ENCODE measurements at regions of chr7 and their contacts with region 1.

Region 1: GRCh38 chr7:73509463-73509862 is 12.6 kb downstream of the BAZ1B start:
- DNase-seq: no peak
- H3K4me3 ChIP-seq: no peak overlapping the region
- H3K27ac ChIP-seq: no peak overlapping the region
- H3K4me1 ChIP-seq: no peaks in the 10 kb centered on the region
- H3K27me3 ChIP-seq: no peaks in the 10 kb centered on the region
- CTCF ChIP-seq: no peak

Region 2: DNA sequence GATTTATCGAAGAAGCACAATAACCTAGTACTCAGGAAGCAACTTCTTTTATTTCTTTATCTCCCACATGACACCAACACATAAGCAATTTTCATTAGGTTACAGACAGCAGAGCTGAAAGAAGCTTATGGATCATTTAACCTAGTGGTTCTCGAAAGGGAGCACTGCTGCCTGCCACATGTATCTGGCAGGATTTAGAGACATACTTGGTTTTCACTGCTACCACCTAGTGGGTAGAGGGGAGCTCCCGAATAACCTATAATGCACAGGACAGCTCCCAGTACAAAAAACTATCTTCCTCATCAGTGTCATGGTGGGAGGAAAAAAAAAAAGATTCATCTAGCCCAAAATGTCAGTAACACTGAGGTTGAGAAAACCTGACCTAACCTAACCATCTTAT is 41.4 kb before region 1 on chr7:
- CTCF ChIA-PET with region 1: no interaction called
- dilution Hi-C with region 1: no loop called
- in situ Hi-C with region 1: no loop called
- intact Hi-C with region 1: loop called (anchors 5 kb)
- DNase-seq: no peak
- H3K4me3 ChIP-seq: no peak overlapping the region
- H3K27ac ChIP-seq: no peak overlapping the region
- H3K4me1 ChIP-seq: peaks cover 3% of the 10 kb centered on the region
- H3K27me3 ChIP-seq: no peaks in the 10 kb centered on the region
- CTCF ChIP-seq: no peak